CD4-positive, alpha-beta memory T cell (primary cell): ENCODE measurements at regions of chr20 and their contacts with region 1.

Region 1: DNA sequence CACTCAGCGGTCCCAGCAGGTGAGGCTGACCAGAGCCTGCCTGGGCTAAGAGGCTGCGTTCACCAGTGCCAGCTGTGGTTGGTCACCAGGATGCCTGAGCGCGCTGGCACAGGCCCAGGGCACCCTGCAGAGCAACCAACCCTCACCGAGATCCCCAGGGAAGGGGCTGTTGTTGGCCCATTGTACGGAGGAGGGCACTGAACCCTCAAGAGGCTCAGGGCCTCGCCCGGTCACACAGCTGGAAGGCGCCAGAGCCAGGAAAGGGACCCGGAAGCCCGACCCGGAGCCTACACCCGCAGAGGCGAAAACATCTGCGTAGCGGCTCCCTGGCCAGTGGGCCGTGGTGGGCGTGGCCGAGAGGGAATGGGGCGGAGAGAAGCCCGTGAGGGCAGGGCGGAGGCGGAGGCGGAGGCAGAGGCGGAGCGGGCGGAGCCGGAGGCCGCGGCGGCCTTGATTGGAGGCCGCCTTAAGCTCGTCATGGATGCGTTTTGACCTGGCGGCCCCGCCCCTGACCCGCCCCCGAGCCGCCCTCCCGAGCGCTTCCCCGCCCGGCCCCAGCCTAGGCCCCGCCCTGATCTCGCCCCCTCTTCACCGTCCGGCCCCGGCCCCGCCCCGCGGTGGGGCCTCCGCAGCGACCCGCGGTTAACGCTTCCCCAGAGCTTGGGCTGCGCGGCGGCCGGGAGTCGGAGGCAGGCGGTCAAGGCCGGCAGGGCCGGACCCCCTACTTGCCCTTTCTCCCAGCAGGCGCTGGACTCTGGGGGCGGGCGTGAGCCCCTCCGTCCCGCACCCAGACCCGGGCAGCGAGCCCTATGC is 2.2 kb upstream of the MRGBP start:
- DNase-seq: peak; percentile 90 to 94 (median 93)
- H3K4me3 ChIP-seq: peak overlapping the region; percentile 78 to 82
- H3K4me3 Mint-ChIP-seq: peak overlapping the region; percentile 76 to 90 (median 86)
- H3K27ac ChIP-seq: peak overlapping the region; percentile 83
- H3K27ac Mint-ChIP-seq: peak overlapping the region; percentile 94 to 98 (median 96)
- H3K4me1 ChIP-seq: peaks cover 32% of the 10 kb centered on the region
- H3K4me1 Mint-ChIP-seq: peaks cover 10 to 59% (median 28%) of the 10 kb centered on the region in 4 donors
- H3K27me3 ChIP-seq: no peaks in the 10 kb centered on the region
- H3K27me3 Mint-ChIP-seq: no peaks in the 10 kb centered on the region

Region 2: DNA sequence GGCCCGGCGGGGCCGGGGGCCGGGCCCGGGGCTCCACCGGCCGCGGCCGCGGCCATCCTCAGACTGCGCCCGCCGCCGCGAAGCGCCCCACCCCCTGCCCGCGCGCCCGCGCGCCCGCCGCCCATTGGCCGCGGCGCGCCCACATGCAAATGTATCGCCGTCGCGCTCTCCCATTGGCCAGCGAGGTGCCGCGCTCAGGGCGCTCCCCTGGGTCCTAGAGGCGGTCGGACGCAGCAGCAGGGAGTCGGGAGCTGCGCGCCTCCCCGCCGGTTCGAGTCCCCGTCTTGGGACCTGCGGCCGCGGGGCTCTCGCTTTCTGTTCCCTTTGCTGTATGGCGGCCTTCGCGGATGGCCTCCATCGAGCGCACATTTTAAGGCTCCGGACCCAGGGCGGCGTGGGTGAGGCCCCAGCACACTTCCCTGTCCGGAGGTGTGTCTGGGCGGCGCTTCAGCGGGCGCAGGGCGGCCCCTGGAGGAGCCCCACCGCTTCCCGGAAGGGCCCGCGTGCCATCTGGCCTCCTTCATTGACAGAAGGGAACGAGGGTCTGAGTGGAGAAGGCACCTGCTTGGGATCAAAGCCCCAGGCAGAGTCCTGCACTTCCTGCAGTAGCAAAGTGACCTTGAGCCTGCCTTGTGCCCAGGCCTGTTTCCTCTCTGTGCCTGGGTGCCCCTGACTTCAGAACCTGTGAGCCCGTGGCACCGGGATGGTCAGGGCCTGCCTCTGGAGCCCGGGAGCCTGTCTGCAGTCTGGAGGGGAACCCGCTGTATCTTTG is 386.7 kb before region 1 on chr20 and contains the start of gene CABLES2:
- CTCF ChIA-PET with region 1: no interaction called
- POLR2A ChIA-PET with region 1: interaction called, 3 read pairs
- intact Hi-C with region 1: loop called (anchors 5 kb)
- DNase-seq: peak; percentile 90 to 94 (median 92)
- H3K4me3 ChIP-seq: peak within 1 kb of the TSS in 1 of 2 donors; percentile 67
- H3K4me3 Mint-ChIP-seq: peak within 1 kb of the TSS; percentile 77 to 85 (median 82)
- H3K27ac ChIP-seq: peak within 1 kb of the TSS; percentile 65
- H3K27ac Mint-ChIP-seq: peak within 1 kb of the TSS; percentile 53 to 90 (median 82)
- H3K4me1 ChIP-seq: peaks cover 34% of the 10 kb centered on the region
- H3K4me1 Mint-ChIP-seq: peaks cover 15 to 45% (median 29%) of the 10 kb centered on the region in 4 donors
- H3K27me3 ChIP-seq: no peaks in the 10 kb centered on the region
- H3K27me3 Mint-ChIP-seq: no peaks in the 10 kb centered on the region
- total RNA-seq, gene CABLES2: 5.9 to 7.5 TPM

Region 3: DNA sequence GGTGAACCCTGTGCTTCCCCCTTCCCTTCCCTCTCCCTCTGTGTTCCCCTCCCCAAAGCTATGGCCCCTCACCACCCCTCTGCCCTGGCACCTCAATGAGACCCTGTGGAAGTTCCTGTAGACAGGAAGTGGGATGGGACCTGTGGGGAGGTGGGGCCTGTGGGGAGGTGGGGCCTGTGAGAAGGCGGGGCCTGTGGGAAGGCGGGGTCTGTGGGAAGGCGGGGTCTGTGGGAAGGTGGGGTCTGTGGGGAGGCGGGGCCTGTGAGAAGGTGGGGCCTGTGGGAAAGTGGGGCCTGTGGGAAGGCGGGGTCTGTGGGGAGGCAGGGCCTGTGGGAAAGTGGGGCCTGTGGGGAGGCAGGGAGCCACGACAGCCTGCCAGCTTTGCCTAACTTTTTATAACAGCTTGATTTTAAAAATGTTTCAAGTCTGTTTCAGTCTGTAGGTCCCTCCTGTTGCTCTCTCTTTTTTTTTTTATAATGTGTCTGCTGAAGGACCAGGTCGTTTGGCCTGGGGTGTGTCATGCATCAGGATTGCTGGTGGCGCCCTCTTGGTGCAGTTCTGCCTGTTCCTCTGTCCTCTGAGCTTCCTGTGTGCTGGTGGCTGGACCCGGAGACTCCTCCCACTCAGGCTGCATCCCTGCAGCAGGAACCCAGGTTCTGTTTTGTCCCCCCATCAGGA is 222.3 kb before region 1 on chr20:
- CTCF ChIA-PET with region 1: no interaction called
- POLR2A ChIA-PET with region 1: no interaction called
- intact Hi-C with region 1: no loop called
- DNase-seq: peak in 1 of 5 donors; percentile 4
- H3K4me3 ChIP-seq: no peak overlapping the region
- H3K4me3 Mint-ChIP-seq: no peak overlapping the region
- H3K27ac ChIP-seq: no peak overlapping the region
- H3K27ac Mint-ChIP-seq: no peak overlapping the region
- H3K4me1 ChIP-seq: no peaks in the 10 kb centered on the region
- H3K4me1 Mint-ChIP-seq: peaks cover 0 to 2% (median under 1%) of the 10 kb centered on the region in 4 donors
- H3K27me3 ChIP-seq: peaks cover 3% of the 10 kb centered on the region
- H3K27me3 Mint-ChIP-seq: peaks cover 13 to 40% of the 10 kb centered on the region in 2 donors

Region 4: DNA sequence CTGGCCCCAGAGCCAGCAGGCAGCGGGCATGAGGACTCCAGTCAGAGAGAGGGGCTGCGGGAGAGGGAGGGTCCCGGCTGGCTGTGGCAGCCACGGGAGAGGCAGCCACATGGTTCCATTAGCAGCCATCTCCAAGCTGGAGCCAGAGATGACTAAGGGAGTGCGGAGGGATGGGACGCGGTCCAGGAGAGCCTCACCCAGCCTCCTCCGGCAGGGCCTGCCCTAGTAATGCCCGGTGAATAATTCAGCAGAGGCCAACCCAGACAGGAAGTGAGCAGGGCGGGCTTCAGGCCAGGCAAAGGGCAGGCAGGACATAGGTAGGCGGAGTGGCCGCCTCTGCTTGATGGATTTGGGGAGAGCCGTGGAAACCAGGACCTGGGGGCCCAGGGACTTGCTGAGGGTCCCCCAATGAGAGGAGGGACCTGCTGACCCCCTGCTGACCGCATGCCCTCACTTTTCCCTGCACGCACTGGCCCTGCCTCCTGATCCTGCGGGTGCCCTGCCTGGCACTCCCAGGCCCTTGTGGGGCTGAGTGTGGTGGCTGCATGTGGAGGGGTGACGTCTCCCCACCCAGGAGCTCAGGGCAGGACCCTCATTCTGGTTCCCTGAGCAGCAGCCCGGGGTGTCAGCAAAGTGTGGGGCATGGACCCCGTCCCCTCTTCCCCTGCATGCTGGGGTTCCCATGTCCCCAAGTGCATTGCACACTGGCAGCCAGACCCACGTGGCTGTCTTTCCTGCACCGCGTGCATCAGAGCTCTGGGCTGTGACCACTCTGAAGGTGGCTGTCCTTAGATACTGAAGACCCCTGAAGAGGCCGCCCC is 203.6 kb before region 1 on chr20:
- CTCF ChIA-PET with region 1: no interaction called
- POLR2A ChIA-PET with region 1: no interaction called
- intact Hi-C with region 1: no loop called
- DNase-seq: no peak
- H3K4me3 ChIP-seq: no peak overlapping the region
- H3K4me3 Mint-ChIP-seq: no peak overlapping the region
- H3K27ac ChIP-seq: no peak overlapping the region
- H3K27ac Mint-ChIP-seq: no peak overlapping the region
- H3K4me1 ChIP-seq: no peaks in the 10 kb centered on the region
- H3K4me1 Mint-ChIP-seq: peaks cover 0 to 4% (median 2%) of the 10 kb centered on the region in 4 donors
- H3K27me3 ChIP-seq: peaks cover 6% of the 10 kb centered on the region
- H3K27me3 Mint-ChIP-seq: peaks cover 27 to 31% of the 10 kb centered on the region in 2 donors

Region 5: GRCh38 chr20:62652051-62652926 is 141.8 kb before region 1 on chr20:
- CTCF ChIA-PET with region 1: interaction called, 4 read pairs
- POLR2A ChIA-PET with region 1: interaction called, 55 read pairs
- intact Hi-C with region 1: loop called (anchors 2 kb)
- DNase-seq: peak; percentile 70 to 84 (median 78)
- H3K4me3 ChIP-seq: peak overlapping the region; percentile 30 to 55
- H3K4me3 Mint-ChIP-seq: peak overlapping the region; percentile 77 to 93 (median 88)
- H3K27ac ChIP-seq: peak overlapping the region; percentile 71
- H3K27ac Mint-ChIP-seq: peak overlapping the region; percentile 94 to 98 (median 98)
- H3K4me1 ChIP-seq: peaks cover 38% of the 10 kb centered on the region
- H3K4me1 Mint-ChIP-seq: peaks cover 15 to 32% (median 25%) of the 10 kb centered on the region in 4 donors
- H3K27me3 ChIP-seq: no peaks in the 10 kb centered on the region
- H3K27me3 Mint-ChIP-seq: no peaks in the 10 kb centered on the region

Region 6: DNA sequence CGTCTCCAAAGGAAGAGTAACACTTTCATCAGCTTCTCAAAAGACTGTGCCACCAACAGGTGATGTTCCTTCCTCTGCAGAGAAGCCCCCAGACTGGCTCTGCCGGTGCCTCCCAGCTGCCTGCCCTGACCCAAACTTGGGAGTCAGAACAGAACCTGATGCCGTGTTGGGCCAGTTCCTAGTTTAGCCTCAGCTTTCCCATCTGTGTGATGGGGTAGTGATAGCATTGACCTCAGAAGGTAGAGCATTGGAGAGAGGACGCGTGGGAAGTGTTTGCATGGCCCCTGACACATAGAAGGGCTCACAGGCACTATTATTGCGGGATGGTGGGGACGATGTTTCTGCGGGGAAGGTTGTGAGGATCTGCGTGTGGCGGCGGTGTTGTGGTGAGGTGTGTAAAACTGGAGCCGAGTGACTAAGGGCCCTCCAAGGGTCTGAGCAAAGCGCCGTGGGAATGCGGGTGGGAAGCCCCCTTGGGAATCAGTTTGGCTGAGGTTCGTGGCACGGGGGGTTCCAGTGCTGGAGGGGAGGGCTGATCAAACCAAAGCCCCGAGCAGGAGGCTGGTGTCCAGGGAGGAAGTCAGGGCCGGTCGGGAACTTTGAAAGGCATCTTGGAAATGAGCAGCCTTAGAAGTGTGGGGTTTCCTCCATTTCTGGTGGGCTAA is 83.8 kb before region 1 on chr20:
- CTCF ChIA-PET with region 1: no interaction called
- POLR2A ChIA-PET with region 1: no interaction called
- intact Hi-C with region 1: no loop called
- DNase-seq: no peak
- H3K4me3 ChIP-seq: no peak overlapping the region
- H3K4me3 Mint-ChIP-seq: peak overlapping the region in 5 of 8 donors; percentile 26 to 48 (median 42)
- H3K27ac ChIP-seq: no peak overlapping the region
- H3K27ac Mint-ChIP-seq: no peak overlapping the region
- H3K4me1 ChIP-seq: peaks cover 5% of the 10 kb centered on the region
- H3K4me1 Mint-ChIP-seq: peaks cover 3 to 30% (median 19%) of the 10 kb centered on the region in 4 donors
- H3K27me3 ChIP-seq: peaks cover 19% of the 10 kb centered on the region
- H3K27me3 Mint-ChIP-seq: peaks cover 12 to 16% of the 10 kb centered on the region in 2 donors

Region 7: DNA sequence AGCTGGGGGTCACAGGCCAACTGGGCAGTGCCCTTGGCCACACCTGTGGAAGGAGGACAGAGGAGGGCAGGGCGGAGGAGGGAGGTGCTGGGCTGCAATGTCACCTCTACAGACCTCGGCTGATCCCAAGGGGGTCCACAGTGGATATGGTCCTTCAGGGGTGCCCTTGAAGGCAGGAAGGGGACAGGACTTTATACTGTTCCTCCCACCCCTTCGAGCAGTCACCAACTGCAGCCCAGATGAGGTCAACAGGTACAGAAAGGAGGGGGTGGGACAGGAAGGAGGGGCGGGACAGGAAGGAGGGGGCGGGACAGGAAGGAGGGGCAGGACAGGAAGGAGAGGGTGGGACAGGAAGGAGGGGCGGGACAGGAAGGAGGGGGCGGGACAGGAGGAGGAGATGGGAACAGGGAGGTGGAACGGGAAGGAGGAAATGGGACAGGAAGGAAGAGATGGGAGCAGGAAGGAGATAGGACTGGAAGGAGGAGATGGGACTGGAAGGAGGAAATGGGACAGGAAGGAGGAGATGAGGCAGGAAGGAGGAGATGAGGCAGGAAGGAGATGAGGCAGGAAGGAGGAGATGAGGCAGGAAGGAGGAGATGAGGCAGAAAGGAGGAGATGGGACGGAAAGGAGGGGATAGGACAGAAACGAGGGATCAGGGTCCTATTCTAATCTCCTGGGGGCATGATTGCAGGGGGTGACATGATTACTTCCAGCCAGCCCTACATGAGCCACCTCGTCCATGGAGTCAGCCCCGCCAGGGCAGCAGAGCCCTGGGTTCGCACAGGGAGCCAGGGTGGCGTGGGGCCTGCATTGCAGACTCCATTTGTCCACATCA is 17.2 kb before region 1 on chr20:
- CTCF ChIA-PET with region 1: interaction called, 13 read pairs
- POLR2A ChIA-PET with region 1: interaction called, 10 read pairs
- intact Hi-C with region 1: loop called (anchors 1 kb)
- DNase-seq: peak; percentile 26 to 68 (median 57)
- H3K4me3 ChIP-seq: peak overlapping the region; percentile 33 to 36
- H3K4me3 Mint-ChIP-seq: peak overlapping the region in 7 of 8 donors; percentile 59 to 84 (median 72)
- H3K27ac ChIP-seq: peak overlapping the region; percentile 55
- H3K27ac Mint-ChIP-seq: peak overlapping the region; percentile 81 to 96 (median 93)
- H3K4me1 ChIP-seq: peaks cover 38% of the 10 kb centered on the region
- H3K4me1 Mint-ChIP-seq: peaks cover 15 to 68% (median 43%) of the 10 kb centered on the region in 4 donors
- H3K27me3 ChIP-seq: no peaks in the 10 kb centered on the region
- H3K27me3 Mint-ChIP-seq: no peaks in the 10 kb centered on the region

Region 8: DNA sequence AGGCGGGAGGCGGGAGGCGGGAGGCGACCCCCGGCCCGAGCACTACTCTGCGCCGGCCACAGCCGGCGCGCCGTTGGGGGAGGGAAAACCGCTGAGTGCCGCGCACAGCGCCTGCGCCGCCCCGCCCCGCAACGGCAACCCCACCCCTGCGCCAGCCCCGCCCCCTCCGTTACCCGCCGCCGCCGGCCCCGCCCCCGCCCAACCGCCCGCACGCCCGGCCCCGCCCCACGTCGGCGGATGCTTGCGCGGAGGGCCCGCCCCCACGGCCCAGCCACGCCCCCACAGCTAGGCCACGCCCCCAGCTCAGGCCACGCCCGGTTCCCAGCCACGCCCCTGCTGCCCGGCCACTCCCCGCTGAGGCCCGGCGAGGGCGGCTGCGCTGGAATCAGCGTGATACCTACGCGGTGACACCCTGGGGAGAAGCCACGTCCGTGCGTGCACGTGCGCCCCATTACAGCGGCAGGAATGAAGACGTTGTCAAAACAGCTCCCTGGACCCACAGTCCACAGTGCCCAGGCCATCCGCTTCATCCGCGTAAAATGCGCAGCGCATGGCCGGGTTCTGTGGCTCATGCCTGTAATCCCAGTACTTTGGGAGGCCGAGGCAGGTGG is 67.7 kb after region 1 on chr20 and contains the start of gene TCFL5:
- CTCF ChIA-PET with region 1: no interaction called
- POLR2A ChIA-PET with region 1: interaction called, 19 read pairs
- intact Hi-C with region 1: loop called (anchors 5 kb)
- DNase-seq: peak; percentile 89 to 98 (median 92)
- H3K4me3 ChIP-seq: no peak within 1 kb of the TSS
- H3K4me3 Mint-ChIP-seq: peak within 1 kb of the TSS; percentile 68 to 80 (median 74)
- H3K27ac ChIP-seq: no peak within 1 kb of the TSS
- H3K27ac Mint-ChIP-seq: peak within 1 kb of the TSS; percentile 76 to 93 (median 81)
- H3K4me1 ChIP-seq: peaks cover 12% of the 10 kb centered on the region
- H3K4me1 Mint-ChIP-seq: peaks cover 10 to 17% (median 15%) of the 10 kb centered on the region in 4 donors
- H3K27me3 ChIP-seq: no peaks in the 10 kb centered on the region
- H3K27me3 Mint-ChIP-seq: peaks cover 0 to 2% of the 10 kb centered on the region in 2 donors
- total RNA-seq, gene TCFL5: 9.9 to 10.3 TPM

Region 9: DNA sequence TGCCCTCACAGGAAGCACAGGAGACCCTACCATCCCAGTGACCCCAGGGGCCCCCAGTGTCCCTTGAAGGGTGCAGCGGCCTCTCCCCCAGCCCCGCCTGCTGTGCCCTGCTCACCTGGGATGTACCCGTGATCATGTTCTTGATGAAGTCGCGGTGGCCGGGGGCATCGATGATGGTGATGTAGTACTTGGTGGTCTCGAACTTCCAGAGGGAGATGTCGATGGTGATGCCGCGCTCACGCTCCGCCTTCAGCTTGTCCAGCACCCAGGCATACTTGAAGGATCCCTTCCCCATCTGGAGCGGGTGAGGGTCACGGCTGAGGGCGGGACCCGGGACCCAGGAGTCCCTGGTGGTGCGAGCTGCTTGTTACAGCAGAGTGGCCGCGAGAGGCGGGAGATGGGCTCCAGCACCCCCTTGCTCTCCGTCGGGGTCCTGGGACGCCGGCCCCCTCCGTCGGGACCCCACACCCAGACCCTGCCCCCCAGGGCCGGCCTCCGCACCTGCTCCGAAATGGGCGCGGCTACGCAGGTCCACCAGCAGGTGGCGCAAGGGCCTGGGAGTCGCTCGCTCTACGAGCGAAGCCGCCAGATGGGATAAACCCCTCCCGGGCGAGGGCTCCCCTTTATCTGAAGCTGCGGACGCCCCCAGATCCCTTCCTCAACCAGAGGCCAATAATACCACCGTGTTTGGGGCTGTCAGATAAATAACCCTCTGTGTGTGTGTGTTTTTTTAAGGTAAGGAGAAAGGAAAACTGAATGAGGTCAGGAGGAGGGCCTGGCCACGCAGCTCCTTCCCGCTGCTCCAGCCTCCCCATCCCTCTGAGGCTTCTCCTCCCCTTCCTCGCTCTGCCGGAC is 701.9 kb after region 1 on chr20:
- CTCF ChIA-PET with region 1: no interaction called
- POLR2A ChIA-PET with region 1: no interaction called
- intact Hi-C with region 1: loop called (anchors 5 kb)
- DNase-seq: peak; percentile 63 to 72 (median 68)
- H3K4me3 ChIP-seq: peak overlapping the region in 1 of 2 donors; percentile 43
- H3K4me3 Mint-ChIP-seq: peak overlapping the region in 7 of 8 donors; percentile 48 to 83 (median 71)
- H3K27ac ChIP-seq: no peak overlapping the region
- H3K27ac Mint-ChIP-seq: no peak overlapping the region
- H3K4me1 ChIP-seq: peaks cover 18% of the 10 kb centered on the region
- H3K4me1 Mint-ChIP-seq: peaks cover 1 to 8% (median 3%) of the 10 kb centered on the region in 4 donors
- H3K27me3 ChIP-seq: peaks cover 12% of the 10 kb centered on the region
- H3K27me3 Mint-ChIP-seq: peaks cover 5 to 9% of the 10 kb centered on the region in 2 donors